Right lobe of liver (tissue), 6 donors: ENCODE measurements at regions of chr7 and their contacts with region 1.

Region 1: DNA sequence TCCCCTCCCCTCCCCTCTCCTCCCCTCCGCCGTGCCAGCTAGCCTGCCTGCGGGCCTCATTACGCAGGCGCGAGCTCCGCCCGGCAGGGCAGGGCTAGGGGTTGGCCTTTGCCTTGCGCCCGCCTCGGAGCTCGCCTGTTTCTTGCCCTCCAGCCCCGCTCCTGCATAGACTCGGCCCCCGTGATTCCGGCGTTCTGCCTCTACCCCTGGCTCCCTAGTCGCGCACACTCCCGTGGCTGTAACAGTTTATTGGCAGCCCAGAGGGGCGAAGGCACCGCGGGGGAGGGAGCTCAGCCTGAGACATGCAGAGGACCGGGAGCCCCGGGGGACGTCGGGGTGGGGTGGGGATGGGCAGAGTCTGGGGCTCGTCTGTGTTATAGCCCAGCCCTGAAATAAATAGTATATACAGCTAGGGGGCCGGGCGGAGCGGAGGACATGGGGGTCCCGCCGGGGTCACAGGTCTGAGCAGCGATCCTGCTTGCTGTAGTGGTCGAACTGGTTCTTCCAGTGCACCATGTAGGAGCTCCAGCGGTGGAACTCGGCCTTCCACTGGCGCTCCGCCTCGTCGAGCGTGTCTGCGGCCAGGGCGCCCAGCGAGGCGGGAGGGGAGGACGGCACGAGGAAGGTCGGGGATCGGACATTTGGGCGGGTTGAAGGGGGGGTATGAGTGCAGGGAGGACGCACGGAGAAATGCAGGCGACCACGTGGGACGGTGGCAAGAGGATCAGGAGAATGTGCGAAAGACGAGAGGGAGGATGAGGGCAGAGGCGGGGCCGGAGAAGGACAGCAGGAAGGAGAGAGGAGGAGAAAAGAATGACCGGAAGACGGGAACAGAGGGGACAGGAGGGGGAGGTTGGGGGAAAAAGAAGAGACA is 483 bp upstream of the UFSP1 start:
- DNase-seq: peak; percentile 96 to 98 (median 96)
- ATAC-seq: peak; percentile 88 to 92 (median 90)
- H3K4me3 ChIP-seq: peak overlapping the region; percentile 77 to 84 (median 82)
- H3K27ac ChIP-seq: peak overlapping the region; percentile 44 to 77 (median 77)
- H3K4me1 ChIP-seq: peaks cover 0 to 15% (median 9%) of the 10 kb centered on the region in 4 donors
- H3K27me3 ChIP-seq: no peaks in the 10 kb centered on the region
- CTCF ChIP-seq: peak in 1 of 4 donors; percentile 12
- POLR2A ChIP-seq: peak; percentile 63

Region 2: DNA sequence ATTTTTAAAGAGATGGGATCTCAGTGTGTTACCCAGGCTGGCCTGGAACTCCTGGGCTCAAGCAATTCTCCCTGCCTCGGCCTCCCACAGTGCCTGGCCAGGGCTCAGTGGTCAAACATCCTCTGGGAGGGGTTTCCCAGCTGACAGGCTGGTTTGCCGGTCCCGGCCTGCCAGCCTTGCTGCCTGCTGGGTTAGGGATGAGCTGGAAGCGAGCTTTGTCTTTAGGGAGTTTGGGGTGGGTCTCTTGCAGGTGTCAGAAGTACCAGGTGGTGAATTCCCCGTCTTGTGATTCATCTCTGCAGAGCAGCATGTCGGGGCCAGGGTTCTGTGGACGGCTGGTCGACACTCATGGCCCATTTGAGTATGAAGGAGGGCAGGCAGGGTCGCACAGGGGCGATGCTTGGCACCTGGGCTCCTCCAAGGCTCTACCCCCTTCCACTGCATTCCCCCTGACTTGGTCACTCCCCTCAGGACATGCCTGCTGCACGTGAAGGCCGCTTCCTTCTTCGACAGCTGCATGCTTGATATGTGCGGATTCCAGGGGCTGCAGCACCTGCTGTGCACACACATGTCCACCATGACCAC is 126.3 kb before region 1 on chr7:
- intact Hi-C with region 1: no loop called
- DNase-seq: no peak
- ATAC-seq: no peak
- H3K4me3 ChIP-seq: no peak overlapping the region
- H3K27ac ChIP-seq: no peak overlapping the region
- H3K4me1 ChIP-seq: no peaks in the 10 kb centered on the region
- H3K27me3 ChIP-seq: no peaks in the 10 kb centered on the region
- CTCF ChIP-seq: no peak
- POLR2A ChIP-seq: no peak

Region 3: GRCh38 chr7:101077303-101078089 is 187.5 kb after region 1 on chr7:
- intact Hi-C with region 1: loop called in 1 of 2 experiments (anchors 5 kb)
- DNase-seq: peak; percentile 80 to 83 (median 81)
- ATAC-seq: peak; percentile 99 to 100 (median 100)
- H3K4me3 ChIP-seq: no peak overlapping the region
- H3K27ac ChIP-seq: no peak overlapping the region
- H3K4me1 ChIP-seq: no peaks in the 10 kb centered on the region
- H3K27me3 ChIP-seq: no peaks in the 10 kb centered on the region
- CTCF ChIP-seq: peak; percentile 74 to 85 (median 79)
- POLR2A ChIP-seq: no peak